Gastrocnemius medialis (tissue), 4 donors: ENCODE measurements at regions of chr19 and their contacts with region 1.

Region 1: GRCh38 chr19:54586397-54586796 is 7.0 kb upstream of the LILRA1 start:
- DNase-seq: no peak
- ATAC-seq: no peak
- H3K4me3 ChIP-seq: no peak overlapping the region
- H3K27ac ChIP-seq: no peak overlapping the region
- H3K4me1 ChIP-seq: no peaks in the 10 kb centered on the region
- H3K27me3 ChIP-seq: no peaks in the 10 kb centered on the region
- CTCF ChIP-seq: no peak
- POLR2A ChIP-seq: no peak

Region 2: DNA sequence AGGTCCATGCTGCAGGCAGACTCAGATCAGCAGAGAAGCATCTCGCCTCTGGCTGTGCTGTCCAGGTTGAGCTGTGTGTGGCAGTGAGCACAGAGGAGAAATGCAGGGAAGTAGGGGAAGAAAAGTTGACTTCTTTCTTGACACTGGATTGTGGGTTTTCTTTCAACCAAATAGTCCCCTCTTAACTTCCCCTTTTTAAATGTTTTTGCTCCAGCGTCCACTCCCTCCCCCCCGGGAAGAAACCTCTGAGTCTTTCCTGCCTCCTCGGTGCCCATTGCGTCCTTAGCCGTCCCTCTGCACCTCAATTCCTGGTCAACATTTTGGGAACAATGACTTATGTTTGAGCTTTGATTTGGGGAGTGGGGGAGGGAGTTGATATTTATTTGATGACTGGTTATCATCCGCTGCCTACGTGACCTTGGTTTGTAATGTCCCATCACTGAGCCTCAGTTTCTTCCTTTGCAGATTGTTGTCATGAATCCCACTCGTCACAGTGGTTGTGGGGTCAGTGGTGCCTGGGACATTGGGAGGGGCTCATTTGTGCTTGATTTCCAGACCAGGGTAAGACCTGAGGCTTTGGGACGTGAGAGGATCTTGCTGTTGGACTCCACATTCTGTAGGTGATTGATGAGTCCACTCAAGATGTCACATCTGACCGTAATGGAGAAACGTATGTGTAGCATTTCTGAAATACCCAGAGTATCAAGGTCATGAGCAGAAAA is 305.2 kb before region 1 on chr19 and contains the start of gene LILRB2:
- in situ Hi-C with region 1: loop called in 1 of 4 experiments (anchors 5 kb)
- intact Hi-C with region 1: loop called (anchors 5 kb)
- DNase-seq: no peak
- ATAC-seq: no peak
- H3K4me3 ChIP-seq: no peak within 1 kb of the TSS
- H3K27ac ChIP-seq: no peak within 1 kb of the TSS
- H3K4me1 ChIP-seq: no peaks in the 10 kb centered on the region
- H3K27me3 ChIP-seq: peaks cover 0 to 5% (median 0%) of the 10 kb centered on the region in 3 donors
- CTCF ChIP-seq: no peak
- POLR2A ChIP-seq: no peak
- total RNA-seq, gene LILRB2: 0.61 to 1.3 (median 1.2) TPM

Region 3: GRCh38 chr19:54606891-54607796 is 20.7 kb after region 1 on chr19:
- in situ Hi-C with region 1: no loop called
- intact Hi-C with region 1: no loop called
- DNase-seq: no peak
- ATAC-seq: no peak
- H3K4me3 ChIP-seq: no peak overlapping the region
- H3K27ac ChIP-seq: no peak overlapping the region
- H3K4me1 ChIP-seq: no peaks in the 10 kb centered on the region
- H3K27me3 ChIP-seq: no peaks in the 10 kb centered on the region
- CTCF ChIP-seq: no peak
- POLR2A ChIP-seq: no peak